ENCODE measurements at regions of chr3 and their contacts with region 1.

Region 1: GRCh38 chr3:179322286-179323196 is at the start of gene ZNF639:
- DNase-seq: peak; percentile 52
- H3K4me3 ChIP-seq: peak within 1 kb of the TSS; percentile 91
- CTCF ChIP-seq: peak; percentile 65

Region 2: DNA sequence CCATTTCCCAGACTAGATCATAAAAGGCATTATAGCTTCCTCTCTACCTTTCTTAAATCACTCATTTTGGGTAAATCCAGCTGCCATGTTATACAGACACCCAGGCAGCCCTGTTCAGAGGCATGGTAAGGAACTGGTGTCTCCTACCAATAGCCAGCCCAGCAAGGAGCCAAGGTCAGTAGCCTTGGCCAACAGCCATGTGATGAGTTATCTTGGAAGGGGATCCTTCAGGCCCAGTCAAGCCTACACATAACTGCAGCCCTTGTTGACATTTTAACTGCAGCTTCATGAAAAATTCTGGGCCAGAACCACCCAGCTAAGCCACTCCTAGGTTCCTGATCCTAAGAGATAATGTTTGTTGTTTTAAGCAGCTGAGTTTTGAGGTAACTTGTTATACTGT is 221.9 kb before region 1 on chr3:
- in situ Hi-C with region 1: loop called (anchors 25 kb)
- DNase-seq: no peak
- H3K4me3 ChIP-seq: no peak overlapping the region
- CTCF ChIP-seq: no peak

Region 3: GRCh38 chr3:179624451-179624850 is 301.9 kb after region 1 on chr3:
- in situ Hi-C with region 1: no loop called
- DNase-seq: no peak
- H3K4me3 ChIP-seq: no peak overlapping the region
- CTCF ChIP-seq: no peak